Gastrocnemius medialis (tissue), 4 donors: ENCODE measurements at regions of chr10 and their contacts with region 1.

Region 1: DNA sequence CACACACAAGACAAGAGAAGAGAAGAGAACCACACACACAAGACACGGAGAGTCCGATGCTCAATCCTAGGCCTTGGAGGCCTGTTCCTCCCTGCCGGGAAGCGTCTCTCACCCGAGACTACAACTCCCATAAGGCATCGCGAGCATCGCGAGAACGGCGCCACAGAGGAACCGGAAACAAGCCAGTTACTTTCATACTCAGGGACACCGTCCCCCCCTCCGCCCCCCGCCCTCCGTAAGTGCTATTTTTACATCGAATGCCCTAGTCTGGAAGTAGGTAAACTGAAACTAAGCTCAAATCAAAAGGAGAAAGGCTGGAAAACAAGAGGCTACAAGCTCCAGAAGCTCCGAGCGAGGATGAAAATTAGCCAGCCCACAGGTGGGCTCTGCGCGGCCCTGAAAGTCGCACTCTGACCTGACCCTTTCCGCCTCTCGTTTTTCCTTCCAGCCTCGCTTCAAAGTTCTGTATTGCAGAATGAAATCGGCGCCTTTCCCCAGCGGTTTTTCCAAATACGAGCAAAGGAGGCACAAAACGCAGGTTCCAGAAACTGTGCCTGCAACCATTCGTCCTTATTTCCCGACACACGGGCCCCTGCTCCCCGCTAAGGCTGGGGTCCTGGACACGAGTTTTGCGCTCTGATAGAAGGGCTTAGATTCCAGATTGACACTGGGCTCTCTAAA is 11.5 kb upstream of the DNAJC12 start:
- DNase-seq: peak; percentile 90 to 95
- ATAC-seq: peak; percentile 98 to 100
- H3K4me3 ChIP-seq: peak overlapping the region; percentile 62 to 84 (median 76)
- H3K27ac ChIP-seq: peak overlapping the region; percentile 92 to 98 (median 92)
- H3K4me1 ChIP-seq: peaks cover 0 to 6% of the 10 kb centered on the region in 2 donors
- H3K27me3 ChIP-seq: no peaks in the 10 kb centered on the region
- CTCF ChIP-seq: peak in 3 of 5 experiments; percentile 15 to 46 (median 32)
- POLR2A ChIP-seq: peak; percentile 52 to 54

Region 2: DNA sequence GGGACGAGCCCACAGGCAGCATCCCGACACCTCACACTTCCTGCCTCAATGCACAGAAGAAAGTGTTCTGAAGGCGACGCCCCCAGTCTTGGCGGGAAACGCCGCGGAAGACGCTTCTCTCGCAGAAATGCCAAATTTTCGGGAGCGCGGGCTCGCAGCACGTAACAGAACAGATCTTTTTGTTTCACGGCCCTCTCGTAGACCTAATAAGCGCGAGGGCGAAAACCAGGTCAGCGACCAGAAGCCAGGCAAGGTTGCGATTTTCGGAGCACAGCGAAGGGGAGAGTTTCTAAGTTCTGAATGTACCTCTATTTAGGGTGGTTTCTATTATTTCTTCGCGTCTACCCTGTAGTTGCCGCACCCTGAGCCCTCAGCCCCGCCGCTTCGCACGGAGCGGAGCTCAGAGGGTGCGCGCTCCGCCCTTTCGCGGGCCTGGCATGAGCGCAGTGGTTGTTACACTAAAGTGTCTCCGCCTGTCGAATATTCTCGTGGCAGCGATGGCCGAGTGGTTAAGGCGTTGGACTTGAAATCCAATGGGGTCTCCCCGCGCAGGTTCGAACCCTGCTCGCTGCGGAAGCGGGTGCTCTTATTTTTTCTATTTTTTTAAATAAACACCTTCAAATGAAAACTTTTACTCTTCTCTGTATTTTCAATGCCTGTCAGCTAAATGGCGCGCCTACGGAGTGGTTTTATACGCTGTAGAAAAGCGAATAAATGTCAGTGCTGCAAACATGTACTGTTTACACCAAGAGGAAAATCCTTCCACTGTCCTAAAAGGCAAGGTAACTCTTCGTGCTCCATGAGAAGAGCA is 85.3 kb before region 1 on chr10:
- in situ Hi-C with region 1: no loop called
- intact Hi-C with region 1: loop called (anchors 2 kb)
- DNase-seq: peak; percentile 83 to 91
- ATAC-seq: peak; percentile 93 to 94
- H3K4me3 ChIP-seq: peak overlapping the region; percentile 67 to 99 (median 80)
- H3K27ac ChIP-seq: peak overlapping the region; percentile 89 to 99 (median 94)
- H3K4me1 ChIP-seq: no peaks in the 10 kb centered on the region
- H3K27me3 ChIP-seq: no peaks in the 10 kb centered on the region
- CTCF ChIP-seq: no peak
- POLR2A ChIP-seq: no peak

Region 3: GRCh38 chr10:67884313-67884841 is 34.9 kb after region 1 on chr10 and contains the start of gene SIRT1:
- in situ Hi-C with region 1: no loop called
- intact Hi-C with region 1: loop called (anchors 1 kb)
- DNase-seq: peak; percentile 97
- ATAC-seq: peak; percentile 86 to 88
- H3K4me3 ChIP-seq: peak within 1 kb of the TSS; percentile 74 to 98 (median 85)
- H3K27ac ChIP-seq: peak within 1 kb of the TSS; percentile 87 to 96 (median 94)
- H3K4me1 ChIP-seq: peaks cover 20 to 22% of the 10 kb centered on the region in 2 donors
- H3K27me3 ChIP-seq: no peaks in the 10 kb centered on the region
- CTCF ChIP-seq: peak in 1 of 5 experiments; percentile 27
- POLR2A ChIP-seq: peak; percentile 98
- total RNA-seq, gene SIRT1: 18.7 to 21.5 (median 19.9) TPM

Region 4: DNA sequence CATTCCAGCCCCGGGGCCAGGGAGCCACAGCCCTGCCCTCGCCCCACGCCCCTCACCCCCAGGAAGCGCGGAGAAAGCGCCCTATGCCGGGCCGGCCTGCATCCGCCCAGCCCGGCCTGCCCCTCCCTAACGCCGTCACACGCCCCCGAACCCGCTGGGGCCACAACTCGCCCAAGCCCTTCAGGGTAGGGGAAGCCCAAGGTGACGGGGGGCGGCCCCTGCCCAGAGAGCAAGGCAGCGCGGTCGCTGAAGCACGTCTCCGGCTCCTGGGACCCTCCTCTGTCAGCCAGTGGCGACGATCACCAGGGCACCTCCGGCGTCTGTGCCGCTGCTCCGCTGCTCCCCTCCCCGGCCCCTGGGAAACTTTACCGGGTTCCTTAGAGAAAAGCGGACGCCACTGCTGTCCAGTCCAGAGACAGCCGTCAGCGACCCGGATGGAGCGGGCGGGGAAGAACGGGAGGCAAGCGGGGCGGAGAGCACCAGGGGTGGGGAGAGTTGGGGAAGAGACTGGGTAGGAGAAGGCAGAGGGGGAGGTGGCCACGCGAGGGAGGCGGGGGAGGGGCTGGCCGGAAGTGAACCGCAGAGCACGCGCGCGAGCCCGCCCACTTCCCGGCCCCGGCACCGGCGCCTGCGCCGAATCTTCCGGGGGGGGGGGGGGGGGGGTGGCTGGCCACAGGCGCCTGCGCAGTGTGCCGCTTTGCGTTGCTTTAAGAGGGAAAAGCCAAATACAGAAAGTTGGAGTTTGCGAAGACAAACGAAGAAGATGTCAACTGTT is 225.5 kb after region 1 on chr10 and contains the start of gene HERC4:
- in situ Hi-C with region 1: loop called in 2 of 4 experiments (anchors 10 kb)
- intact Hi-C with region 1: loop called (anchors 2 kb)
- DNase-seq: peak; percentile 94
- ATAC-seq: peak; percentile 92 to 96
- H3K4me3 ChIP-seq: peak within 1 kb of the TSS; percentile 87 to 100 (median 96)
- H3K27ac ChIP-seq: peak within 1 kb of the TSS; percentile 94 to 99 (median 99)
- H3K4me1 ChIP-seq: peaks cover 32 to 42% of the 10 kb centered on the region in 2 donors
- H3K27me3 ChIP-seq: no peaks in the 10 kb centered on the region
- CTCF ChIP-seq: peak in 1 of 5 experiments; percentile 4
- POLR2A ChIP-seq: peak; percentile 88 to 90
- total RNA-seq, gene HERC4: 12.8 to 25.2 (median 13.1) TPM

Region 5: DNA sequence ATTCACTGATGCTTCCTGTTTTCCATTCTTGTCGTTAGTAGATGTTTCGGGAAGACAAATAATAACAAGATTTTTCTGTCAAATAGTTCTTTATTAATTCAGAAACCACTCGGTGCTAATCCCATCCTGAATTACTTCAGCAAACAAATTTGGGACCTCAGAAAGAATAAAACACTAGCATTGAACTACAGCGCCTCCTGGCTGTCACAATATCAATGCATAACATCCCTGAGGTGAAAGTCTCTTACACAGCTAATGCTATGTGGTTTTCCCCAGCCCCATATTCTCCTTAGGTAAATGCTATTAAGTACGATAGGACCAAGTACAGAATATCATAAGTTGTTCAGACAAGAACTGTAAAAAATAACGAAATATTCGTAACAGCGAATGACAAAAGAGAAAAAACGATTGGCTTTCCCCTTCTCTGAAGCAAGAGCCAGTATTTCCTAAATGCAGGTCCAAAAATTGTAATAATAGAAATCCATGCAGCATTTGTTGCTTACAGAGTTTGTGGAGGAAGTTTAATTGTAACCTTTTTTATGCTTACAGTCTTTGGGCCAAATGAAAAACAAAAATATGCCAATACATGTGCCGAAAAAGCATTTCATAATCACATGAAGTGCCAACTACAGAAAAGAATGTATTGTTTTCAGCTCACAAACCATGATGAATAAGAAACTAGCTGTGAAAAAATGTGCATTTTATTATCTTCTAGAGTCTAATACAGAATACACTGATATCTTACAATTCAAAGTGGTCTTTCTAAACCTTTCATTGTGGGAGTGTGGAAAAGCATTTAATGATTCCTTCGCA is 307.1 kb after region 1 on chr10:
- in situ Hi-C with region 1: loop called (anchors 10 kb)
- intact Hi-C with region 1: loop called (anchors 5 kb)
- DNase-seq: peak in 1 of 2 donors; percentile 48
- ATAC-seq: peak in 1 of 2 donors; percentile 33
- H3K4me3 ChIP-seq: no peak overlapping the region
- H3K27ac ChIP-seq: peak overlapping the region; percentile 79 to 88 (median 85)
- H3K4me1 ChIP-seq: peaks cover 36 to 61% of the 10 kb centered on the region in 2 donors
- H3K27me3 ChIP-seq: no peaks in the 10 kb centered on the region
- CTCF ChIP-seq: peak; percentile 77 to 84 (median 81)
- POLR2A ChIP-seq: no peak

Region 6: GRCh38 chr10:68163735-68164134 is 314.3 kb after region 1 on chr10:
- in situ Hi-C with region 1: loop called (anchors 10 kb)
- intact Hi-C with region 1: loop called (anchors 5 kb)
- DNase-seq: no peak
- ATAC-seq: peak in 1 of 2 donors; percentile 17
- H3K4me3 ChIP-seq: no peak overlapping the region
- H3K27ac ChIP-seq: peak overlapping the region in 2 of 4 donors; percentile 38 to 46
- H3K4me1 ChIP-seq: peaks cover 0 to 2% of the 10 kb centered on the region in 2 donors
- H3K27me3 ChIP-seq: no peaks in the 10 kb centered on the region
- CTCF ChIP-seq: no peak
- POLR2A ChIP-seq: no peak

Region 7: GRCh38 chr10:68301790-68302502 is 452.5 kb after region 1 on chr10:
- in situ Hi-C with region 1: loop called in 3 of 4 experiments (anchors 25 kb)
- intact Hi-C with region 1: no loop called
- DNase-seq: no peak
- ATAC-seq: peak; percentile 74 to 84
- H3K4me3 ChIP-seq: no peak overlapping the region
- H3K27ac ChIP-seq: no peak overlapping the region
- H3K4me1 ChIP-seq: peaks cover 0 to 5% of the 10 kb centered on the region in 2 donors
- H3K27me3 ChIP-seq: no peaks in the 10 kb centered on the region
- CTCF ChIP-seq: peak in 4 of 5 experiments; percentile 26 to 55 (median 45)
- POLR2A ChIP-seq: no peak